Activated B cell treated with CpG ODN at 0.5 μM for 24 hours (primary cell): ENCODE measurements at regions of chr19 and their contacts with region 1.

Region 1: GRCh38 chr19:58278157-58279041 is at the start of gene ZNF8:
- DNase-seq: peak; percentile 88
- ATAC-seq: peak; percentile 98
- H3K4me3 Mint-ChIP-seq: peak within 1 kb of the TSS; percentile 91
- H3K27ac Mint-ChIP-seq: peak within 1 kb of the TSS; percentile 95
- H3K4me1 Mint-ChIP-seq: peaks cover 44% of the 10 kb centered on the region
- H3K27me3 Mint-ChIP-seq: no peaks in the 10 kb centered on the region
- CTCF ChIP-seq: no peak
- total RNA-seq, gene ZNF8: 4.7 and 5.3 TPM in 2 replicates

Region 2: GRCh38 chr19:58097781-58098681 is 180.4 kb before region 1 on chr19 and contains the start of gene ZSCAN18:
- CTCF ChIA-PET with region 1: no interaction called
- POLR2A ChIA-PET with region 1: interaction called, 4 read pairs
- intact Hi-C with region 1: loop called (anchors 1 kb)
- DNase-seq: peak; percentile 98
- ATAC-seq: peak; percentile 93
- H3K4me3 Mint-ChIP-seq: peak within 1 kb of the TSS; percentile 90
- H3K27ac Mint-ChIP-seq: peak within 1 kb of the TSS; percentile 100
- H3K4me1 Mint-ChIP-seq: peaks cover 18% of the 10 kb centered on the region
- H3K27me3 Mint-ChIP-seq: no peaks in the 10 kb centered on the region
- CTCF ChIP-seq: no peak
- total RNA-seq, gene ZSCAN18: 40.8 and 49.8 TPM in 2 replicates

Region 3: GRCh38 chr19:58305065-58305931 is 26.9 kb after region 1 on chr19 and contains the start of gene ERVK3-1:
- CTCF ChIA-PET with region 1: no interaction called
- POLR2A ChIA-PET with region 1: interaction called, 9 read pairs
- intact Hi-C with region 1: loop called (anchors 1 kb)
- DNase-seq: peak; percentile 89
- ATAC-seq: peak; percentile 97
- H3K4me3 Mint-ChIP-seq: peak within 1 kb of the TSS; percentile 100
- H3K27ac Mint-ChIP-seq: peak within 1 kb of the TSS; percentile 98
- H3K4me1 Mint-ChIP-seq: peaks cover 38% of the 10 kb centered on the region
- H3K27me3 Mint-ChIP-seq: no peaks in the 10 kb centered on the region
- CTCF ChIP-seq: no peak
- total RNA-seq, gene ERVK3-1: 61.4 and 74.3 TPM in 2 replicates

Region 4: GRCh38 chr19:58346961-58347931 is 68.8 kb after region 1 on chr19:
- CTCF ChIA-PET with region 1: no interaction called
- POLR2A ChIA-PET with region 1: interaction called, 5 read pairs
- intact Hi-C with region 1: loop called (anchors 1 kb)
- DNase-seq: peak; percentile 84
- ATAC-seq: peak; percentile 93
- H3K4me3 Mint-ChIP-seq: peak overlapping the region; percentile 93
- H3K27ac Mint-ChIP-seq: peak overlapping the region; percentile 76
- H3K4me1 Mint-ChIP-seq: peaks cover 30% of the 10 kb centered on the region
- H3K27me3 Mint-ChIP-seq: no peaks in the 10 kb centered on the region
- CTCF ChIP-seq: no peak

Region 5: GRCh38 chr19:58374200-58374599 is 95.8 kb after region 1 on chr19:
- CTCF ChIA-PET with region 1: no interaction called
- POLR2A ChIA-PET with region 1: no interaction called
- intact Hi-C with region 1: no loop called
- DNase-seq: no peak
- ATAC-seq: no peak
- H3K4me3 Mint-ChIP-seq: no peak overlapping the region
- H3K27ac Mint-ChIP-seq: no peak overlapping the region
- H3K4me1 Mint-ChIP-seq: peaks cover 6% of the 10 kb centered on the region
- H3K27me3 Mint-ChIP-seq: no peaks in the 10 kb centered on the region
- CTCF ChIP-seq: no peak

Region 6: DNA sequence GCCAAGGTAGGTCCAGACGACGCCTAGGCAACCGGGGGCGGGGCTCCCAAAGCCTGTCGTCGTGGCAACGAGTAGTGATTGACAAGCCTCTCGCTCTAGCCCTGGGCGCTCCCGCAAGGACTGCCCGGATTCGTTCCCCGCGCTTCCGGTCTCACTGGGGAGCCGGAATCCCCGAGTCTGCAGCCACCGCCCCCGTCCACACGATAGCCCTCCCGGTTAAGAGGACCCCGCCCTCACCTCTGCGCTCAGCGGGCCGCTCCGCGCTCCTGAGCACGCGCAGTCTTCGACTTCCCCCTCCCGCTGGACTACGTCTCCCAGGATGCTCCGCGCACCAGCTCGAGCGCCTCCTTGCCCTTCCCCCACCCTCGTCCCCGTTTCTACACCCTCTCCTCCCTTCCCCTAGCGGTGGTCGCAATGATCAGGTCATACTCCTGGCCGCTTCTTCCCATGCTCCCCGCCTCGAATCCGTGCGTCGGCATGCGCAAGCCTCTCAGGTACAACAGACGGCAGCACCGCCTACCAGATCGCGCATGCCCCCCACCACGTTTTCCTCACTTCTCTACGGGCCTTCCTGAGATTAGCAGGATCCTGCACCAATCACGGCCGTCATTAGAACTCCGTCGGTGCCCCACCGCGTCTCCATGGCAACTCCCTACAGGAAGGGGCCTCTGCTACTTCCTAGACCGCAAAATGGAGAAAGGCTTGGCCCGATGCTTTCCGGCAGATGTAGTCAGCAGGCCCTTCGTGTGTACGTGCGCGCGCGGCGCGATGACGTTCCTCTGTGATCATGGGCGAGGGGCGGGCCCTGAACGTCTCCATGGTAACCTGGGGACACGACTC is 294.6 kb after region 1 on chr19 and contains the start of gene MZF1:
- CTCF ChIA-PET with region 1: no interaction called
- POLR2A ChIA-PET with region 1: no interaction called
- intact Hi-C with region 1: loop called (anchors 1 kb)
- DNase-seq: peak; percentile 100
- ATAC-seq: peak; percentile 61
- H3K4me3 Mint-ChIP-seq: peak within 1 kb of the TSS; percentile 97
- H3K27ac Mint-ChIP-seq: peak within 1 kb of the TSS; percentile 100
- H3K4me1 Mint-ChIP-seq: peaks cover 44% of the 10 kb centered on the region
- H3K27me3 Mint-ChIP-seq: no peaks in the 10 kb centered on the region
- CTCF ChIP-seq: no peak
- total RNA-seq, gene MZF1: 41.9 and 54.5 TPM in 2 replicates